ENCODE measurements at regions of chrX and their contacts with region 1.

Region 1: GRCh38 chrX:2595258-2595657 is 94.5 kb upstream of the DHRSX start:
- DNase-seq: no peak
- ATAC-seq: no peak
- H3K4me3 ChIP-seq: no peak overlapping the region
- H3K4me3 Mint-ChIP-seq: no peak overlapping the region
- H3K27ac ChIP-seq: no peak overlapping the region
- H3K27ac Mint-ChIP-seq: no peak overlapping the region
- H3K4me1 ChIP-seq: no peaks in the 10 kb centered on the region
- H3K4me1 Mint-ChIP-seq: peaks cover 8% of the 10 kb centered on the region
- H3K27me3 ChIP-seq: no peaks in the 10 kb centered on the region
- H3K27me3 Mint-ChIP-seq: no peaks in the 10 kb centered on the region
- CTCF ChIP-seq: no peak

Region 2: GRCh38 chrX:1657367-1658070 is 937.7 kb before region 1 on chrX:
- CTCF ChIA-PET with region 1: no interaction called
- POLR2A ChIA-PET with region 1: no interaction called
- intact Hi-C with region 1: loop called (anchors 1 kb)
- DNase-seq: peak; percentile 76
- ATAC-seq: peak; percentile 19
- H3K4me3 ChIP-seq: peak overlapping the region in 4 of 5 experiments; percentile 21 to 52 (median 33)
- H3K4me3 Mint-ChIP-seq: peak overlapping the region; percentile 85
- H3K27ac ChIP-seq: peak overlapping the region; percentile 75
- H3K27ac Mint-ChIP-seq: peak overlapping the region; percentile 84
- H3K4me1 ChIP-seq: peaks cover 11 to 32% of the 10 kb centered on the region in 2 donors
- H3K4me1 Mint-ChIP-seq: peaks cover 36% of the 10 kb centered on the region
- H3K27me3 ChIP-seq: no peaks in the 10 kb centered on the region
- H3K27me3 Mint-ChIP-seq: no peaks in the 10 kb centered on the region
- CTCF ChIP-seq: no peak

Region 3: DNA sequence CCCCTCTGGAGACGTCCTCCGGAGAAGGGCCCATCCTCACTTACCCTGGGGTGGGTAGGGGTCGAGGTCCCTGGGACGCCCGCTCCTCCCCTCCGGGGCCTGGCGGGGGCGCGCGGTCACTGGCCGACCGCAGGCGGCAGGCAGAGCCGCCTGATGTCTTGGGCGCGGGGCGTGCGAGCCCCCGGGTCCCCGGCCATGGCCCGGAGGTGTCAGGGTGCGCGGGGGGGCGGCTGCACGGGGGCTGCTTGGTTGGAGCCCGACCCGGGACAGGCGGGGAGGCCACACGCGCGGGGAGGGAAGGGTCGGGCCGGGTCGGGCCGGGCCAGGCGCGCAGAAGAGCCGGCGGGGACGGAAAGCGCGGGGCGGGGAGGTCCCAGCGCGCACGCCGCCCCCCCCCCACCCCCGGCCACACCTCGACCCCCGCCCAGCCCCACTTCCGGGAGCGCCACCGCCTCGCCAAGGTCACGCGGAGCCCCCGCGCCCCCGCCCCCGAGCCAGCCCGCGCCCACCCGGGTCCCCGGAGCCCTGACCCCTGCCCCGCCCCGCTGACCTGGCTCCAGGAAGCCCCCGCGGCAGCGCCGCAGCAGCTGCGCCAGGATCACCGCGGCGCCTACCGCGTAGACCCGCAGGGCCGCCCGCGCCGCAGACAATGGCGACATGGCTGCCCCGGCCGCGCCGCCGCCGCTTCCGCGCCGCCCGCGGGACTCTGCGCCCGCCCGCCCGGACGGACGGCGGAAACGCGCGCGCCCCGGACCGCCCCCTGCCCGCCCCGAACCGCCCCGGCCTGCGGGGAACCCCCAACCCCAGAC is 94.8 kb before region 1 on chrX and contains the starts of genes DHRSX and ZBED1:
- CTCF ChIA-PET with region 1: no interaction called
- POLR2A ChIA-PET with region 1: no interaction called
- intact Hi-C with region 1: loop called (anchors 1 kb)
- DNase-seq: peak; percentile 71
- ATAC-seq: peak; percentile 72
- H3K4me3 ChIP-seq: peak within 1 kb of the TSS; percentile 56 to 78 (median 69)
- H3K4me3 Mint-ChIP-seq: peak within 1 kb of the TSS; percentile 87
- H3K27ac ChIP-seq: peak within 1 kb of the TSS; percentile 43 to 85
- H3K27ac Mint-ChIP-seq: peak within 1 kb of the TSS; percentile 88
- H3K4me1 ChIP-seq: peaks cover 22 to 38% of the 10 kb centered on the region in 2 donors
- H3K4me1 Mint-ChIP-seq: peaks cover 32% of the 10 kb centered on the region
- H3K27me3 ChIP-seq: no peaks in the 10 kb centered on the region
- H3K27me3 Mint-ChIP-seq: no peaks in the 10 kb centered on the region
- CTCF ChIP-seq: no peak
- total RNA-seq, gene DHRSX: 39.0 and 46.2 TPM in 2 replicates
- total RNA-seq, gene ZBED1: 44.7 and 54.5 TPM in 2 replicates

Measured in B cell (primary cell).